ENCODE measurements at regions of chr1 and their contacts with region 1.

Region 1: DNA sequence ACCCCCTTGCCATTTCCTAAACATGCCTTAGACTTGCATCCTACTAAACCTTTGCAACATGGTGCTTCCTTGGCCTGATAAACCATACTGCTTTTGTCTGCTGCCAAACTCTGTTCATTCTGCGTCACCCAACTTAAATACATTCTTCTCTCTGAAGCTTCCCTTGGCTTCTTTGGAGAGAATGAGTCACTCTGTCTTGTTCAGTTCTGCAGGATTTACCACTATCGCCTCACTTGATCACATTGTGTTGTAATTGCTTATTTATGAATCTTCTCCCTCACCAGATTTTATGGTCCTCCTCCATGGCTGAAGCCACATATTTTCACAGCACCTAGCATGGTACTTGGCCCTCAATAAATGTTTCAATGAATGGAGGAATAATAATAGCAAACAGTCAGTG is 21.7 kb upstream of the TUT4 start:
- DNase-seq: peak; percentile 92
- H3K4me3 ChIP-seq: no peak overlapping the region
- CTCF ChIP-seq: no peak

Region 2: DNA sequence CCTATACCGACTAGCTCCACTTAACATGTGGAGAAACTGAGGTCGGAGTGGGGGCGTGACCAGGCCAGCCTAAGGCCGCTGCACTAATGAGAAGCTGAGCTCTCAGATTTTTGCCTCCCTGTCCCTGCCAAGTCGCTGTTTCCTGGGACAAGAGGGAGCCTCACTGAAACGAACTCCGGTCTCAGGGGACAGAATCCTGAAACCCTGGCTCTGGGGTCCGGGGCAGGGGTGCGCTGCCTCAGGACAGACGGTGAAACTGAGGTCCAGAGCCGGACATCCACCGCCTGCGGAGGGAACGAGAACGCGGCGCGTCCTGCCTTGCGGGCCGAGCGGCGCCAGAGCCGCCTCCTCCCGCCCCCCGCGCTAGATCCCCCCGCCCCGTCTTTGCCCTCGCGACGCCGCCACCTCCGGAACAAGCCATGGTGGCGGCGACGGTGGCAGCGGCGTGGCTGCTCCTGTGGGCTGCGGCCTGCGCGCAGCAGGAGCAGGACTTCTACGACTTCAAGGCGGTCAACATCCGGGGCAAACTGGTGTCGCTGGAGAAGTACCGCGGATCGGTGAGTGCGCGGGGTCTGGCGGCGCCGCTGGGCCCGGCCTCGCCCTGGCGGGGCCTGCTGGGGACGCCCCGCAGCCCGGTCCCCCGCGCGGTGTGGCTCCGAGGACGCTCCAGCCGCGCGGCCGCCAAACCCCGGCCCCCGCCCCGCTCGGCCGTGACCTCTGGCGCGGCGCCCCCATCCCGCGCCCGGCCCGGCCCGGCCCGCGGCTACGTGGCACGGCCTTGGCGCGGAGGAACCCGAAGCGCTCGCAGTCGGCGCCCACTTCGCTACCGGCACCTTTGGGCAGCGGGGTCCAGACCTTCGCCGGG is 27.6 kb after region 1 on chr1 and contains the start of gene GPX7:
- in situ Hi-C with region 1: loop called (anchors 5 kb)
- DNase-seq: no peak
- H3K4me3 ChIP-seq: peak within 1 kb of the TSS; percentile 42
- CTCF ChIP-seq: no peak

Region 3: DNA sequence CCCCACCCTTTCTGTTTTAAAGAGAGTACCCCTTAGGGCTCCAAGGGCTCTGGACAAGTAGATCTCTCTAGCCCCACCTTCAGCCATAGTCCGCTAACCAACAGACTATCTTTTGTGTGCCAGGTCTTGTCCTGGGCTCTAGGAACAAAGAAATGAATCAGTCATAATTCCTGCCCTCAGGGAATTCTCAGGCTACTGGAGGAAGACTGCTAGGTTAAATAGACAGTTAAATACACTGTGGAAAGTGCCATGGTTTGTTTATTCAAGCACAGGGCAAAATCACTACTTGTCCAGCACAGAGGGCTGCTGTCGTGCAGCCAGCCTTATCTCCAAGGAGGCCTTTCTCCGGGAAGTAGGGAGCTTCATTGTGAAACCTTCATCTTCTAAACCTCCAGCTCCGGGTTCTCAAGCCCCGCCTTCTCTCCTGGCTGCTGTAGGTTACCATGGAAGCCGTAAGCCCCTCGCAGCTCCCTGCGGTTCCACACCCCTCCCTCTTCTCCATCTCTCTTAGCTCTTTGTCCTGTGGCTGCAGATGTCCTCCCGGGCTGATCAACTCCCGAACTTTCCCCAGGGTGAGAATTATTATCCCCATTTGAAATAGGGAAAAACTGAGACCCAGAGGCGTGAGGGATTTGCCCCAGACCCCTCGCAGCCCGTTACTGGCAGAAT is 88.2 kb after region 1 on chr1:
- in situ Hi-C with region 1: loop called (anchors 5 kb)
- DNase-seq: no peak
- H3K4me3 ChIP-seq: no peak overlapping the region
- CTCF ChIP-seq: no peak

Measured in astrocyte of the cerebellum (primary cell).